PC-9 (cell line): ENCODE measurements at regions of chr7 and their contacts with region 1.

Region 1: DNA sequence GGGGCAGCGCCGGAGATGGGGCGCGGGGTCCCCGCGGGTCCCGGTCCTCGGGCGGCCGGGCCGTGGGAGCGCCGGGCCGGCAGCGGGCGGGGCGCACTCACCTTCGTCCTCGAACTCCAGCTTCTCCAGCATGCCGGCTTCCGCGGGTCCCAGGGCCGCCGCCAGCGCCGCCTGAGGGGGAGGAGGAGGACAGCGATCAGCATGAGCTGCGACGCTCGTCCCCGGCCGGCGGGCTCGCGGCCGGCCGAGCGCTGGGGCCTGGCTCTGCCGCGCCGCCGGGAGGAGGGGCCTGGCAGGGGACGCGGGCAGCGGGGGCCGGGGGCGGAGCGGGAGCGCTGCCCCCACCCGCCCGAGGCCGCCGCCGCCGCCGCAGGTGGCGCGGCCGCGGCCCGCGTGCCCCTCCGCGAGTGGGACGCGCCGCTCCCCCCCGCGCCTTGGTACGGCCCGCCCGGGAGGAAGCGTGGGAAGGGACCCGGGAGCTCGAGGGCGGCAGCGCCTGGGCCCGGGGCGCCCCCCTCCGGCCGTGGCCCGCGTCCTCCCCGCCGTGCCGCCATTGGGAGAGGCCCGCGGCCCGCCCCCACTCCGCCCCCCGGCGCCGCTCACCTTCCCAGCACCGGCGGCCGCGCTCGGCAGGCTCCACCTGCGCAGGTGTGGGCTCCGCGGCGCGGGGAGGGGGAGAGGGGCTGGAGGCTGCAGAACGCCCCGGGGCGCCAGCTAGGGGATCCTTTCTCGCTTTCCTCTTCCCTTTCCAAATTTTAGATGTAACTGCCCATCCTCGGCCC is 112.5 kb upstream of the RHEB start:
- DNase-seq: peak; percentile 68 to 97
- H3K4me3 ChIP-seq: peak overlapping the region; percentile 73
- H3K27ac ChIP-seq: peak overlapping the region; percentile 75
- H3K4me1 ChIP-seq: peaks cover 24% of the 10 kb centered on the region
- H3K27me3 ChIP-seq: no peaks in the 10 kb centered on the region
- CTCF ChIP-seq: no peak

Region 2: DNA sequence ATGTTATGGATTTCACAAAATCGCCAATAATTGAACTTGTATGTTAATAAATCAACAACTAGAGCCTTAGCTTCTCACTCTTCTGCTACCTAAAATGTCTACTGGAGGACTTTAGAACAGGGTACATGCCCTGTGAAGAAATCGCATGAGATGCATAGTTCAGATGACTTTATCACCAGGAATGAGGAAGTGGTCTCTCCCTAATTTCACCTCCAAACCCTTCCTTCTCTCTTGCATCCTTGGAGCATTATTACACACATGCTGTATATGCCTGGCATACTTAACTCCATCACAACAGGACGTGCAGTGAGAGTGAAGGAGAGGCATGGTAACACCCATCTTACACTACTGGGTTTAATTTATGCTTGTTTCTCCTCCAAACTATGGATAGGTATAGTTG is 140.3 kb before region 1 on chr7:
- CTCF ChIA-PET with region 1: no interaction called
- POLR2A ChIA-PET with region 1: no interaction called
- intact Hi-C with region 1: loop called (anchors 5 kb)
- DNase-seq: peak; percentile 58 to 99
- H3K4me3 ChIP-seq: no peak overlapping the region; the same call in 1 of the 2 replicates
- H3K27ac ChIP-seq: peak overlapping the region; percentile 86
- H3K4me1 ChIP-seq: peaks cover 65% of the 10 kb centered on the region
- H3K27me3 ChIP-seq: no peaks in the 10 kb centered on the region
- CTCF ChIP-seq: no peak

Region 3: GRCh38 chr7:151599401-151600227 is 32.5 kb before region 1 on chr7:
- CTCF ChIA-PET with region 1: interaction called, 4 read pairs
- POLR2A ChIA-PET with region 1: interaction called, 6 read pairs
- intact Hi-C with region 1: loop called (anchors 2 kb)
- DNase-seq: peak; percentile 69 to 93
- H3K4me3 ChIP-seq: peak overlapping the region; percentile 28; the same call in 1 of the 2 replicates
- H3K27ac ChIP-seq: peak overlapping the region; percentile 76
- H3K4me1 ChIP-seq: peaks cover 71% of the 10 kb centered on the region
- H3K27me3 ChIP-seq: no peaks in the 10 kb centered on the region
- CTCF ChIP-seq: no peak

Region 4: GRCh38 chr7:151687523-151688218 is 55.5 kb after region 1 on chr7:
- CTCF ChIA-PET with region 1: interaction called, 3 read pairs
- POLR2A ChIA-PET with region 1: no interaction called
- intact Hi-C with region 1: loop called (anchors 1 kb)
- DNase-seq: peak; percentile 99 to 100
- H3K4me3 ChIP-seq: no peak overlapping the region
- H3K27ac ChIP-seq: peak overlapping the region; percentile 84
- H3K4me1 ChIP-seq: peaks cover 53% of the 10 kb centered on the region
- H3K27me3 ChIP-seq: no peaks in the 10 kb centered on the region
- CTCF ChIP-seq: no peak

Region 5: DNA sequence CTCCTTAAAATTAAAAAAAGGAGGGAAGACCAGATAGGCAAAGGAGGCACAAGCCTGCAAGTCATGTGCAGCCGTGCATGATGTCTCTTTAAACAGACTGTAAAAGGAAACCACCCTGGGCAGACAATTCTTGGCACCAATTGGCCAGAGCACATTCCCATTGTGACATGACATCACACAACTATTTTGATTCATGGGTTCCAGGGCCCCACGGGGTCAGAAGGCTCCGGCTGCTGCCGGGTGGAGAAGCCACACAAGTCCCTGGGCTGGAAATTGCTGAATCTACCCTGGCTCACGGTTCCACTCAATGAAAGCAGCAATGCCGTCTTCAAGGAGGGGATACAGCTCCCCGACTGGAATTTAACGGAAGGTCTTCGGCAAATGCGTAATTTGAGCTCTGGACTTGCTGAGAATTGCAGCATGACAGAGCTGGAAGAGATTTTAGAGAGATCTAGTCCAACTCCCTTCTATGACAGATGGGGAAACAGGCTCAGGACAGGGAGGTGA is 104.3 kb after region 1 on chr7:
- CTCF ChIA-PET with region 1: interaction called, 7 read pairs
- POLR2A ChIA-PET with region 1: interaction called, 4 read pairs
- intact Hi-C with region 1: loop called (anchors 2 kb)
- DNase-seq: peak; percentile 90 to 94
- H3K4me3 ChIP-seq: peak overlapping the region; percentile 26; the same call in 1 of the 2 replicates
- H3K27ac ChIP-seq: peak overlapping the region; percentile 81
- H3K4me1 ChIP-seq: peaks cover 29% of the 10 kb centered on the region
- H3K27me3 ChIP-seq: no peaks in the 10 kb centered on the region
- CTCF ChIP-seq: peak; percentile 58

Region 6: GRCh38 chr7:151936207-151936606 is 304.0 kb after region 1 on chr7:
- CTCF ChIA-PET with region 1: no interaction called
- POLR2A ChIA-PET with region 1: no interaction called
- intact Hi-C with region 1: loop called (anchors 5 kb)
- DNase-seq: no peak
- H3K4me3 ChIP-seq: no peak overlapping the region
- H3K27ac ChIP-seq: no peak overlapping the region
- H3K4me1 ChIP-seq: peaks cover 29% of the 10 kb centered on the region
- H3K27me3 ChIP-seq: peaks cover 5% of the 10 kb centered on the region; the same call in 1 of the 2 replicates
- CTCF ChIP-seq: no peak